WTC11 (cell line): ENCODE measurements at regions of chr4 and their contacts with region 1.

Region 1: GRCh38 chr4:102430461-102430910 is 70.7 kb upstream of the NFKB1 start:
- DNase-seq: no peak
- ATAC-seq: no peak
- H3K4me3 Mint-ChIP-seq: peak overlapping the region; percentile 75
- H3K27ac Mint-ChIP-seq: peak overlapping the region; percentile 67
- H3K4me1 Mint-ChIP-seq: peaks cover 15% of the 10 kb centered on the region
- H3K27me3 Mint-ChIP-seq: no peaks in the 10 kb centered on the region
- CTCF ChIP-seq: no peak

Region 2: DNA sequence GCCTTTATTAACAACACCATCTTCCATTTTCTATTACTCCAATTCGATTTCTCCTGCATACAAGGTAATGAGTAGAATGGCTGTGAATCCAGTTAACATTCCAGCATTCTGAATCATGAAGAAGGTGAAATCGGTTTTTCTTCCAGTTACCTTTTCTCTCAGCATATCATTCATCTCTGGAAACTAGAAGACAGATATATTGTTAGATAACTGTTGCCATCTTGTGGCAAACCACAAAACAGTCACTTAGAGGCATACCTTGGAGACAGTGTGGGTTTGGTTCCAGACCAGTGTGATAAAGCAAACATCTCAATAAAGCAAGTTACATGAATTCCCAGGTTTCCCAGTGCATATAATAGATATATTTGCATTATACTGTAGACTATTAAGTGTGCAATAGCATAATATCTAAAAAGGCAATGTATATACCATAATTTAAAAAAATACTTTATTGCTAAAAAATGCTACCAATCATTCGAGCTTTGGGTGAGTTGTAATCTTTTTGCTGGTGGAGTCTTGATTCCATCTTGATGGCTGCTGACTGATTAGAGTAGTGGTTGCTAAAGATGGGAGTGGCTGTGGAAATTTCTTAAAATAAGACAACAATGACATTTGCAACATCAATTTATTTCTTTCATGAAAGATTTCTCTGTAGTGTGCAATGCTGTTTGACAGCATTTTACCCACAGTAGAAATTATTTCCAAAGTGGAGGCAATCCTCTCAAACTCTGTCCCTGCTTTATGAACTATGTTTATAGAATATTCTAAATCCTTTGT is 167.3 kb before region 1 on chr4:
- CTCF ChIA-PET with region 1: interaction called, 21 read pairs
- POLR2A ChIA-PET with region 1: no interaction called
- DNase-seq: no peak
- ATAC-seq: peak; percentile 95
- H3K4me3 Mint-ChIP-seq: no peak overlapping the region
- H3K27ac Mint-ChIP-seq: no peak overlapping the region
- H3K4me1 Mint-ChIP-seq: peaks cover 12% of the 10 kb centered on the region
- H3K27me3 Mint-ChIP-seq: no peaks in the 10 kb centered on the region
- CTCF ChIP-seq: no peak

Region 3: DNA sequence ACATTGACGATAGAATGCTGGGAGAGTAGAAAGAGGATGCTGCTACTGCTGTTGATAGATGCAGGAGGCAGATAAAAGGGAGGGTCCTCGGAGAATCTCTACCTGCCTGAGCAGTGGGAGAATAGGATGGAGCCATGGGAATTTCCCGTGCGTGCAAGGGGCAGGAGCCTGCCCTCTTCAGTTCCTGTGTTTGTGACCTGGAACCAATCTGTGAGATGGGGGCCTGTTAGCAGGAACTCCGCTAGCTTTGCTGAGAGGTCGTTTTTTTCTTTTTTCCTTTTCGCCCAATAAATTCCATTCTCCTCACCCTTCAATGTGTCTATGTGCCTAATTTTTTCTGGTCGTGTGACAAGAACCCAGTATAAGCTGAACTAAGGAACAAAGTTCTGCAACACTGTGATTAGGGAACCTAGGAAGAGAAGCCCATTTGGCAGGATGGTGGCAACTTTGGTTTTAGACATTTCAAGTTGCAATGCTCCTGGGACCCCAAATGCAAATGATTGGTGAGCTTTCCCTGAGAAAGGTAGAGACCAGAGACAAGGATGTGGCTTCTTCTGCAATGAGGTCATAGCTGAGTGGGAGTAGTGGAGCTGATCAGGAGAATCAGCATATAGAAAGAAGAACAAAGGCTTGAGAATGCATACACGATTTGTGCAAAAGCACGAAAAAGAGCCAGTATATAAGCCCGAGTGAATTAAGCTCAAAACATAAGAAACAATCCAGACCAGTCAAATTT is 109.1 kb before region 1 on chr4:
- CTCF ChIA-PET with region 1: interaction called, 31 read pairs
- POLR2A ChIA-PET with region 1: no interaction called
- DNase-seq: no peak
- ATAC-seq: peak; percentile 28
- H3K4me3 Mint-ChIP-seq: no peak overlapping the region
- H3K27ac Mint-ChIP-seq: peak overlapping the region; percentile 65
- H3K4me1 Mint-ChIP-seq: peaks cover 68% of the 10 kb centered on the region
- H3K27me3 Mint-ChIP-seq: no peaks in the 10 kb centered on the region
- CTCF ChIP-seq: no peak

Region 4: GRCh38 chr4:102352781-102353180 is 77.7 kb before region 1 on chr4:
- CTCF ChIA-PET with region 1: no interaction called
- POLR2A ChIA-PET with region 1: no interaction called
- DNase-seq: no peak
- ATAC-seq: no peak
- H3K4me3 Mint-ChIP-seq: no peak overlapping the region
- H3K27ac Mint-ChIP-seq: no peak overlapping the region
- H3K4me1 Mint-ChIP-seq: peaks cover 11% of the 10 kb centered on the region
- H3K27me3 Mint-ChIP-seq: no peaks in the 10 kb centered on the region; the same call in 1 of the 2 replicates
- CTCF ChIP-seq: no peak

Region 5: DNA sequence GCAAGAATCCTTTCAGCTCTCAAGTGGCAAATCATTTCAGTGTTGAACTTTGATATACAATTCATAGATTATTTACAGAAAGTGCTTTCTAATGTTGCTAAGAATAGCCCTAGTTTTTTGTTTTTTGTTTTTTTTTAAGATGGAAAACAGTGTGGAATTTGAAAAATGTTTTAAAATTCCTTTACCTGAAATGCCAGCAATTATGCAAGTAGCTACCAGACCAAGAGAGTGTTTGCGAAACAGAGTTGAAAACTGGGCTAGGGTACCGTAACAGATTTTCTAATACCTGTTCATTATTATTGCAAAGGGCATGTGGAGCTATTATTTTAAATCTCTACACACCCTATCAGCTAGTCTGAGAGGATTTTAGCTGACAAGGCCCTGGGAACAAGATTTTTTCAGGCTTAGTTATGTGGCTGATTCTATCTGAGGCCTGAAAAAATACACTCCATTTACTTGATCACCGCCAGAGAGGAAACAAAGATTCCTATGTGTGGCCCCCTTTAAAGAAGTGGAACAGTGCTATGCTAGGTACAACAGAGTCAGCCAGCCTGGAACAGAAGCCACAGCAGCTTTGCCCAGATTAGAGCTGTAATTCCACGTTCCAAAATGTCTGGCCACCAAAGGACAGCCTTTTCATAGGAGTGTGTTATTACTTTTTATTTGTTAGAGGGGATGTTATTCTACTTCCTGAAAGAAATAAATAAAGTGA is 38.3 kb before region 1 on chr4:
- CTCF ChIA-PET with region 1: interaction called, 12 read pairs
- POLR2A ChIA-PET with region 1: no interaction called
- DNase-seq: no peak
- ATAC-seq: peak; percentile 69
- H3K4me3 Mint-ChIP-seq: no peak overlapping the region
- H3K27ac Mint-ChIP-seq: peak overlapping the region; percentile 92
- H3K4me1 Mint-ChIP-seq: peaks cover 30% of the 10 kb centered on the region
- H3K27me3 Mint-ChIP-seq: no peaks in the 10 kb centered on the region; the same call in 1 of the 2 replicates
- CTCF ChIP-seq: no peak

Region 6: DNA sequence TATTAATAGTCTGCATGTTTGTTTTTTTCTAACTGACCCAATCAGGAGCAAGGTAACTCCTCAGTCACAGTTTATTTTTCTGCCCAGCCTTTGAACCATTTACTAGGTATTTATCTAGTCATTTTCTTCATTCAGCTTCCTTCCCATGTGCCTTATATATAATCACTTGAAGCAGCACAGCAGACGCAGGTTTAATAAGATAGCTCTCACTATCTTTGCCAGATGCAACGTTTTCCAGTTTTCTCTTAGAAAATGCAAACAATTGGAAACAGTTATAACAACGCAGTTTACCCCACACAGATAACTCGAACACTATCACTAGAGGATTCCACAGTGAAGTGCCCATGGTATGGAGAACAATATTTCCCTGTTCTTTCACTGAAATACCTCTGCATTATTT is 14.3 kb after region 1 on chr4:
- CTCF ChIA-PET with region 1: interaction called, 16 read pairs
- POLR2A ChIA-PET with region 1: no interaction called
- DNase-seq: no peak
- ATAC-seq: no peak
- H3K4me3 Mint-ChIP-seq: no peak overlapping the region
- H3K27ac Mint-ChIP-seq: no peak overlapping the region
- H3K4me1 Mint-ChIP-seq: peaks cover 23% of the 10 kb centered on the region
- H3K27me3 Mint-ChIP-seq: no peaks in the 10 kb centered on the region; the same call in 1 of the 2 replicates
- CTCF ChIP-seq: no peak

Region 7: DNA sequence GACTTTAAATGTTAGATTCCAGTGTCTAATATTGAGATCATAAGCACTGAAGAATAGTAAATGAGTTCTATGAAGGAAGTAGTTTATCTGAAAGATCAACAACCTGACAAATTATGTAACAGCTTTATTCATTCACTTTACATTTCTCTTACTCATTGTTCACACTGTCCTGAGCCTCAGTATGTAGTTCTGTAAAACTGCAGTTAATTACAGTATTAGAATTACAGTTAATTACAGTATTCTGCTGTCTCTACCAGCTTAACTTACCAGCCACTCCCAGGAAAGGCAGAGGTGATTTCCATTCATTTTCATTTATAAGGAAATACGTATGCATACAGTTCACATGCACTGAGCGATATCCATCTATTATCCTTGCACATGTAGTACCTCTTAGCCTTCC is 103.4 kb after region 1 on chr4:
- CTCF ChIA-PET with region 1: no interaction called
- POLR2A ChIA-PET with region 1: no interaction called
- DNase-seq: no peak
- ATAC-seq: no peak
- H3K4me3 Mint-ChIP-seq: no peak overlapping the region
- H3K27ac Mint-ChIP-seq: no peak overlapping the region
- H3K4me1 Mint-ChIP-seq: peaks cover 2% of the 10 kb centered on the region
- H3K27me3 Mint-ChIP-seq: no peaks in the 10 kb centered on the region
- CTCF ChIP-seq: no peak

Region 8: DNA sequence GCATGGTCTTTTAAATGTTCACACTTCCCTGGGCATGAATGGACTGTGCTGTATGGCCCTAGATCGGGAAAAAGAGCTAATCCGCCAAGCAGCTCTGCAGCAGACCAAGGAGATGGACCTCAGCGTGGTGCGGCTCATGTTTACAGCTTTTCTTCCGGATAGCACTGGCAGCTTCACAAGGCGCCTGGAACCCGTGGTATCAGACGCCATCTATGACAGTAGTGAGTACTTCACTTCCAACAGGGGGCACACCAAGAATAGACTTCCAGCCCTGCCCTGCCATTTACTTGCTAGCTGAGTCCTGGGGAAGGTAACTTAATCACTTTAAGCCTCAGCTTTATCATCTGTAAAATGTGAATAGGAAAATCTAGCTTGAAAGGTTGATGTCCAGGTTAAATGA is 148.3 kb after region 1 on chr4:
- CTCF ChIA-PET with region 1: interaction called, 21 read pairs
- POLR2A ChIA-PET with region 1: no interaction called
- DNase-seq: peak; percentile 72
- ATAC-seq: peak; percentile 99
- H3K4me3 Mint-ChIP-seq: peak overlapping the region; percentile 39
- H3K27ac Mint-ChIP-seq: no peak overlapping the region
- H3K4me1 Mint-ChIP-seq: peaks cover 17% of the 10 kb centered on the region
- H3K27me3 Mint-ChIP-seq: no peaks in the 10 kb centered on the region
- CTCF ChIP-seq: no peak